ENCODE measurements at regions of chr19 and their contacts with region 1.

Region 1: DNA sequence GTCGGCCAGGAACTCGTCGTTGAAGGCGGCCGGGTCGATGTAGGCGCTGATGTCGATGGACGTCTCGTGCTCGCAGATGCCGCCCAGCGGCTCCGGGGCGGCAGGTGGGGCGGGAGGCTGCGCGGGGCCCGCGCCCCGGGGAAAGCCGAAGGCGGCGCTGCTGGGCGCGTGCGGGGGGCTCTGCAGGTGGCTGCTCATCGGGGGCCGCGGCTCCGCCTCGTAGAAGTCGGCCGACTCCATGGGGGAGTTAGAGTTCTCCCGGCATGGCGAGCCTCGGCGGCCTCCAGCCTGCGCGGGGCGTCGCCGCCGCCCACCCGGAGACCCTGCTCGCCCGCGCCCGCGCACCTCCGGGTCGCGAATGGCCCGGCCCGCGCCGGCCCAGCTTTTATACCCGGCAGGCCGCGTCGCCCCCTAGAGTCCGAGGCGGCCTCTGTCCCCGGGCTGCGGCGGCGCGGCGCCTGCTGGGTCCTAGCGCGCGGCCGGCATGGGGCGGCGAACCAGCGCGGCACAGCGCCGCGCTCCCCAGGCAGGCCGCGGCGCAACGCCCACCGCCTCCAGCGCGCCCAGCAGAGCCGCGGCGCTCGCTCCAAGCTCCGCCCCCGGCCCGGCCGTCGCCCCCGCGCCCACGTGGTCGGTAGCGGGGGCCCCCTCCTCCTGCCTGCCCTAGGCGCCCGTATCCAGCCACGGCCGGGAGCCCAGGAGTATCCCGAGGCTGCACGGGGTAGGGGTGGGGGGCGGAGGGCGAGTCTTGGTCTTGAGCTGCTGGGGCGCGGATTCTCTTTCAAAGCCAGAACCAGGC is at the start of gene CEBPA:
- DNase-seq: peak; percentile 90 to 97
- H3K4me3 ChIP-seq: peak within 1 kb of the TSS; percentile 87
- H3K4me3 Mint-ChIP-seq: peak within 1 kb of the TSS; percentile 85
- H3K27ac Mint-ChIP-seq: peak within 1 kb of the TSS; percentile 73
- H3K4me1 ChIP-seq: peaks cover 55% of the 10 kb centered on the region
- H3K4me1 Mint-ChIP-seq: peaks cover 49% of the 10 kb centered on the region
- H3K27me3 ChIP-seq: no peaks in the 10 kb centered on the region
- H3K27me3 Mint-ChIP-seq: no peaks in the 10 kb centered on the region
- CTCF ChIP-seq: peak; percentile 63 to 75
- total RNA-seq, gene CEBPA: 97.9 and 110 TPM in 2 replicates

Region 2: DNA sequence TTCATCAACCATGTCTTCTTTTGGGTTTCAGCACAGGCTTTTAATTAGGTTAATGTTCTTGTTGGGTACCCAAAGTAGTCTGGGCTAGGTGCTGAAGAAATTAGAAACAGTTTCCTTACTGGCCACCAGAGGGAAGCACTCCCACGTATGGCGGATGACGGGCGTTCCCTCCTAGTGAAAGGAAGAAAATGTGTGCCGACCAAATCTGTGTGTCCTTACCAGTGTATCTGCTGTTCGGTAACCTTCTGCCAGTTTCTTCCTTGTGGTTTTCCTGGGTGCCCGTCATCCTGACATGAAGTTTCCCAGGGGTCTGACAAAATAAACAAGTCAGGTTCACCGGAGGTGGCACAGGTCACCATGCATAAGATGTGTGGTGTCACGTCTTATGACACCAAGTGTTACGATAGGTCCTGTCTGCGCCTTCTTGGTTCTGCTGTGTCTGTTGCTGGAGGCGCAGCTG is 176.4 kb before region 1 on chr19:
- CTCF ChIA-PET with region 1: no interaction called
- POLR2A ChIA-PET with region 1: no interaction called
- intact Hi-C with region 1: no loop called
- DNase-seq: peak in 1 of 2 experiments; percentile 66
- H3K4me3 ChIP-seq: no peak overlapping the region
- H3K4me3 Mint-ChIP-seq: no peak overlapping the region
- H3K27ac Mint-ChIP-seq: no peak overlapping the region
- H3K4me1 ChIP-seq: peaks cover 8% of the 10 kb centered on the region
- H3K4me1 Mint-ChIP-seq: peaks cover 10% of the 10 kb centered on the region
- H3K27me3 ChIP-seq: no peaks in the 10 kb centered on the region
- H3K27me3 Mint-ChIP-seq: no peaks in the 10 kb centered on the region
- CTCF ChIP-seq: peak; percentile 88 to 91

Region 3: DNA sequence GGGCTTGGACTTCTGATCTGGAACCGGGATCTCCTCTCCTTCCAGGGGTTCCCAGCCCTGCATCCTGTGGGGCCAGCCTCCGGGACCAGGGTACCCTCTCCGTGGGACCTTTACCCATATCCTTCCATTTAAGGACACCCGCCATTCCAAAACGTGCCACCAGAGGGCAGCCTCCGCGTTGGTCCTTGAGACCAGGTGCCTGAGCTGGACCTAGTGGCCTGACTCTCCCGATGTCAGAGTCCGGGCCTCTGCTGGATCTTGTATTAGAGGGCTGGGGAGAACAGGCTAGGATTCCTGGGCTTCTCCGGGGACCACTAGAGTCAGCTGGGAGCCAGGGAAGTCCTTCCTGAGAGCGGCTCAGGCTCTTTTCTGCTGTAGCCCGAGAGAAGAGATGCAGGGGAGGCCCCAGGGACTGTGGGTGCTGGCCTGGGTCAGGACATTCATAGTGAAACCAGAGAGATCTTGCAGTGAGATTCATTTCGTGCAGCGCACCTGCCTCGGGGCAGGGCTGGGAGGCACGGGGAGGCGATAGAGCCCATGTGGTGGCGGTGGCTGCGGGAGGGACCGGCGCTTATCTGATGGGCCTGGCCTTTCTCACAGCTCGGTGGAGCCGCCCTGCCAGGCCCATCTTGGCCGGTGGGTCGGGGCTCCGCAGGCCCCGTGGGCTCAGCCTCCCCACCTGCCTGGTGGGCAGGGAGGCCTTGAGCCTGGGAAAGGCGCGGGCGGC is 66.9 kb before region 1 on chr19:
- CTCF ChIA-PET with region 1: interaction called, 13 read pairs
- POLR2A ChIA-PET with region 1: interaction called, 3 read pairs
- intact Hi-C with region 1: loop called (anchors 2 kb)
- DNase-seq: peak; percentile 89 to 92
- H3K4me3 ChIP-seq: no peak overlapping the region
- H3K4me3 Mint-ChIP-seq: no peak overlapping the region
- H3K27ac Mint-ChIP-seq: no peak overlapping the region
- H3K4me1 ChIP-seq: 0 out of 2 replicates have a peak, but pooled peaks cover 4% of the 10 kb centered on the region
- H3K4me1 Mint-ChIP-seq: no peaks in the 10 kb centered on the region
- H3K27me3 ChIP-seq: no peaks in the 10 kb centered on the region
- H3K27me3 Mint-ChIP-seq: peaks cover 2% of the 10 kb centered on the region
- CTCF ChIP-seq: peak; percentile 92 to 97

Region 4: GRCh38 chr19:33241530-33242101 is 60.8 kb before region 1 on chr19:
- CTCF ChIA-PET with region 1: interaction called, 7 read pairs
- POLR2A ChIA-PET with region 1: interaction called, 3 read pairs
- intact Hi-C with region 1: loop called (anchors 2 kb)
- DNase-seq: peak in 1 of 2 experiments; percentile 60
- H3K4me3 ChIP-seq: no peak overlapping the region
- H3K4me3 Mint-ChIP-seq: no peak overlapping the region
- H3K27ac Mint-ChIP-seq: no peak overlapping the region
- H3K4me1 ChIP-seq: peaks cover 11% of the 10 kb centered on the region; the same call in 1 of the 2 replicates
- H3K4me1 Mint-ChIP-seq: peaks cover 6% of the 10 kb centered on the region
- H3K27me3 ChIP-seq: no peaks in the 10 kb centered on the region
- H3K27me3 Mint-ChIP-seq: no peaks in the 10 kb centered on the region
- CTCF ChIP-seq: peak; percentile 77 to 94

Region 5: DNA sequence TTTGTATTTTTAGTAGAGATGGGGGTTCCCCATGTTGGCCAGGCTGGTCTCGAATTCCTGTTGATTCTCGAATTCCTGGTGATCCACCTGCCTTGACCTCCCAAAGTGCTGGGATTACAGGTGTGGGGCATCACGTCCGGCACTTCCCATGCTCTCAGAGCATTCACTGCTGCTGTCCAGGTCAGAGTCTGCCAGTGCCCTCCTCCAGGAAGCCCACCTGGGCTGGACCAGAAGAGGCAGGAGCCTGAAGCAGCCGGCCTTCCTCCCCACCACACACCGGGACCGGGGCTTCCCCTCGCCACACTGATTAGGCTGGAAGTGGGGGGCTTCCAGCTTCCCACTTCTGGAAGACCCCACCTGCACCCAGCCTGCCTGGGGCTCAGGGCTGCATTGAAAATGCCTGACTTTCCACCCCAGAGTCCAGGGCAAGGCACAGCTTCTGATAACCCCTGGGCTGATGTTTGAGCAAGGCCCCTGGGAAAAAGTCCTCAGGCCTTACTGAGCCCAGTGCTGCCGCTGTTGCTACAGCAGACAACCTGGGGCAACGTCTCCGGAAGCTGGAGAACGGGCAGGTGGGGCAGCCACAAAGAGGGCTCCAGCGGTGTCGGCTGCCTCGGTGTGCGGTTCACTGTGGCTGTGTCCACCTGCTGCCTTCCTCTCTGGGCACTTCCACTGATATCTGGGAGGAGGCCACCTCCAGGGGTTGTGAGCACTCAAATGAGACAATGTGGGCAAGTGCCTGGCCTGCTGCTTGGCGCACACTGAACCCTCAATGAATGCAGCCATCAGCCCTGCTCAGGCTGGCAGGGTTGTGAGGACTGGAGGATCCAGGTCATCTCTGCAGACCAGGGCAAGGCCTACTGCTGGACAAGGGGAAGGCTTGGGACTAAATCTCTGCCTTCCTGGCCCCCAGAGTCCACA is 22.7 kb before region 1 on chr19:
- CTCF ChIA-PET with region 1: interaction called, 9 read pairs
- POLR2A ChIA-PET with region 1: interaction called, 10 read pairs
- intact Hi-C with region 1: loop called (anchors 1 kb)
- DNase-seq: peak; percentile 51 to 69
- H3K4me3 ChIP-seq: no peak overlapping the region
- H3K4me3 Mint-ChIP-seq: no peak overlapping the region
- H3K27ac Mint-ChIP-seq: peak overlapping the region; percentile 97
- H3K4me1 ChIP-seq: peaks cover 65% of the 10 kb centered on the region
- H3K4me1 Mint-ChIP-seq: peaks cover 27% of the 10 kb centered on the region
- H3K27me3 ChIP-seq: no peaks in the 10 kb centered on the region
- H3K27me3 Mint-ChIP-seq: no peaks in the 10 kb centered on the region
- CTCF ChIP-seq: no peak

Region 6: DNA sequence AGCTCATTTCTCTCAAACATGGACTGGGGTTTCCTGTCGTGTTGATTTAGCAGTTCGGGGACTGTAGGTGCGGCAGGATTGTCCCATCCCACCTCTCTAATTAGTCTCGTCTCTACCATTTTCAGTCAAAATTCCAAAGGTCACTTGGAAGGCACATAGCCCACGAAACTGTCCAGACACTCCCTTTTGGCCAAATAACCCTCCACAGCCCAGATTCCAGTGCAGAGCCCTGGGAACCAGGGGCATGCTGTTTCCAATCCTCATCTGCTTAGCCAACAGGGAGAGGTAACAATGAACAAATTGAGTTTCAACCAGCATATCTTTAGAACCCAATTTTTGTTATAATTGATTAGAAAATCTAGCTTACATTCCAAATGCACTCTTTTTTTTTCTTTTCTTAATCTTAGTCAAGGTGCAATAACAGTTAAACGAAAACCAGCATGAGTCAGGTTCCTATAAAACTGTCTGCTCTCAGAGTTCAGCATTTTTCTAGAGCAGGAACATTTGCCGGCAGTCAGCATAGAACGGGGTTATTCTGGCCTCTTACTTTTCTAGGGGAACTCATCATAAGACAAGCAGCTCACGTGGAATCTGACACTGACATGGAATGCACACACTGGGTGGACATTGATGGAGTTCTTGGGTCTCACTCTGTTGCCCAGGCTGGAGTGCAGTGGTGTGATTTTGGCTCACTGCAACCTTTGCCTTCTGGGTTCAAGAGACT is 14.3 kb after region 1 on chr19:
- CTCF ChIA-PET with region 1: interaction called, 13 read pairs
- POLR2A ChIA-PET with region 1: interaction called, 13 read pairs
- intact Hi-C with region 1: loop called (anchors 2 kb)
- DNase-seq: peak; percentile 78 to 88
- H3K4me3 ChIP-seq: no peak overlapping the region
- H3K4me3 Mint-ChIP-seq: peak overlapping the region; percentile 64
- H3K27ac Mint-ChIP-seq: peak overlapping the region; percentile 93
- H3K4me1 ChIP-seq: peaks cover 30% of the 10 kb centered on the region
- H3K4me1 Mint-ChIP-seq: peaks cover 26% of the 10 kb centered on the region
- H3K27me3 ChIP-seq: no peaks in the 10 kb centered on the region
- H3K27me3 Mint-ChIP-seq: no peaks in the 10 kb centered on the region
- CTCF ChIP-seq: no peak

Region 7: GRCh38 chr19:33368074-33368864 is 65.9 kb after region 1 on chr19:
- CTCF ChIA-PET with region 1: interaction called, 32 read pairs
- POLR2A ChIA-PET with region 1: interaction called, 82 read pairs
- intact Hi-C with region 1: loop called (anchors 2 kb)
- DNase-seq: no peak
- H3K4me3 ChIP-seq: no peak overlapping the region
- H3K4me3 Mint-ChIP-seq: no peak overlapping the region
- H3K27ac Mint-ChIP-seq: peak overlapping the region; percentile 73
- H3K4me1 ChIP-seq: peaks cover 48% of the 10 kb centered on the region
- H3K4me1 Mint-ChIP-seq: peaks cover 49% of the 10 kb centered on the region
- H3K27me3 ChIP-seq: no peaks in the 10 kb centered on the region
- H3K27me3 Mint-ChIP-seq: no peaks in the 10 kb centered on the region
- CTCF ChIP-seq: no peak

Region 8: GRCh38 chr19:33373701-33374421 is 71.5 kb after region 1 on chr19 and contains the start of gene CEBPG:
- CTCF ChIA-PET with region 1: interaction called, 32 read pairs
- POLR2A ChIA-PET with region 1: interaction called, 82 read pairs
- intact Hi-C with region 1: loop called (anchors 1 kb)
- DNase-seq: peak; percentile 66 to 90
- H3K4me3 ChIP-seq: peak within 1 kb of the TSS; percentile 65
- H3K4me3 Mint-ChIP-seq: peak within 1 kb of the TSS; percentile 93
- H3K27ac Mint-ChIP-seq: peak within 1 kb of the TSS; percentile 95
- H3K4me1 ChIP-seq: peaks cover 28% of the 10 kb centered on the region
- H3K4me1 Mint-ChIP-seq: peaks cover 26% of the 10 kb centered on the region
- H3K27me3 ChIP-seq: no peaks in the 10 kb centered on the region
- H3K27me3 Mint-ChIP-seq: no peaks in the 10 kb centered on the region
- CTCF ChIP-seq: peak; percentile 22 to 62
- total RNA-seq, gene CEBPG: 74.9 and 79.4 TPM in 2 replicates